ENCODE measurements at regions of chr1 and their contacts with region 1.

Region 1: GRCh38 chr1:108643492-108644335 is 17.2 kb downstream of the HENMT1 start:
- DNase-seq: peak; percentile 69
- H3K4me3 Mint-ChIP-seq: no peak overlapping the region
- H3K27ac Mint-ChIP-seq: no peak overlapping the region
- H3K4me1 Mint-ChIP-seq: peaks cover 7% of the 10 kb centered on the region
- H3K27me3 Mint-ChIP-seq: no peaks in the 10 kb centered on the region
- CTCF ChIP-seq: peak; percentile 51

Region 2: GRCh38 chr1:108512239-108512981 is 131.3 kb before region 1 on chr1:
- CTCF ChIA-PET with region 1: interaction called, 122 read pairs
- POLR2A ChIA-PET with region 1: interaction called, 6 read pairs
- intact Hi-C with region 1: loop called (anchors 1 kb)
- DNase-seq: peak; percentile 52
- H3K4me3 Mint-ChIP-seq: no peak overlapping the region
- H3K27ac Mint-ChIP-seq: no peak overlapping the region
- H3K4me1 Mint-ChIP-seq: no peaks in the 10 kb centered on the region
- H3K27me3 Mint-ChIP-seq: peaks cover 15% of the 10 kb centered on the region
- CTCF ChIP-seq: peak; percentile 86

Region 3: DNA sequence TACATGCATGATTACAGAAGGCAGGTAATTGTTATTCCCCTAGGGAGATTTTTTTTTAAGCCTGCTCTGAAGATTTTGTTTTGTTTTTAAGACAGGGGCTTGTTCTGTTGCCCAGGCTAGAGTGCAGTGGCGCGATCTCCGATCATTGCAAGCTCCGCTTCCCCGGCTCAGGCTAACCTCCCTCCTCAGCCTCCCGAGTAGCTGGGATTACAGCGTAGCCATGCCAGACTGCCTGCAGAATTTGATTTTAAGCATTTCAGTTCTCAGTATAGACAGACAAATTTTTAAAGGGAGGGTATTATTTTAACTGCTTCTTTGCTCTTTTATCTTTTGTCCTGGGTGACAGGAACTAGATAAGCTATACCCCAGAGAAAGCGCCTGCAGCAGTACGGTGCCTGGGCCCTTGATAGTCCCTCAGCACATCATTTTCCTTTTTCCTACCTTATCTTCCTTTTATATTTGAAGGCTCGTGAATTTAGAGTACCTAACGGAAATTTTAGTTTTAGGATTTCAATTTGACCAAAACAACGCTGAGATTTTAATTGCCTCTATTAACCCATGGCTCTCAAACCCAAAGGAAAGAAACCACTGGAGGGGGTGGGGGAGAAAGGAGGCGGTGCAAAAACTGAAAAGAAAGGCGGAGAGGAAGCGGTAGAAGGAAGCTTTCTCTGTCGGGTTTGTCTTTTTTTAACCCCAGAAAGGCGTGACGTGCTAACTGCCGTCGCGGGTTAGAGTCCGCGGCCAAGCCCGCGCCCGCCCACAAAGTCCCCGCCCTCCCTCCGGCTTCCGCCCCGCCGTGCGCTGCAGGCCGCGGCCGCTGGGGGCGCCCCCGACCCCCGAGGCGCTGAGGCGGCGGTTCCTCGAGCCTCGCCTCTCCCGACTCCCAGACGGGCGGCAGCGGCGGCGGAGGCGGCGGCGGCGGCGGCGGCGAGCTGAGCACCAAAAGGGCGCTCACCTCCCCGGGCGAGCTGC is 84.2 kb before region 1 on chr1 and contains the start of gene EEIG2:
- CTCF ChIA-PET with region 1: interaction called, 25 read pairs
- POLR2A ChIA-PET with region 1: no interaction called
- intact Hi-C with region 1: no loop called
- DNase-seq: peak; percentile 82
- H3K4me3 Mint-ChIP-seq: peak within 1 kb of the TSS; percentile 78
- H3K27ac Mint-ChIP-seq: no peak within 1 kb of the TSS
- H3K4me1 Mint-ChIP-seq: no peaks in the 10 kb centered on the region
- H3K27me3 Mint-ChIP-seq: no peaks in the 10 kb centered on the region
- CTCF ChIP-seq: peak; percentile 71
- total RNA-seq, gene EEIG2: 0.63 and 0.93 TPM in 2 replicates

Region 4: GRCh38 chr1:108590957-108591356 is 52.8 kb before region 1 on chr1:
- CTCF ChIA-PET with region 1: interaction called, 3 read pairs
- POLR2A ChIA-PET with region 1: no interaction called
- intact Hi-C with region 1: loop called (anchors 5 kb)
- DNase-seq: peak; percentile 61
- H3K4me3 Mint-ChIP-seq: no peak overlapping the region
- H3K27ac Mint-ChIP-seq: no peak overlapping the region
- H3K4me1 Mint-ChIP-seq: peaks cover 5% of the 10 kb centered on the region
- H3K27me3 Mint-ChIP-seq: no peaks in the 10 kb centered on the region
- CTCF ChIP-seq: no peak

Region 5: GRCh38 chr1:108661030-108661620 is 17.4 kb after region 1 on chr1 and contains the start of gene HENMT1:
- CTCF ChIA-PET with region 1: interaction called, 10 read pairs
- POLR2A ChIA-PET with region 1: no interaction called
- intact Hi-C with region 1: no loop called
- DNase-seq: no peak
- H3K4me3 Mint-ChIP-seq: no peak within 1 kb of the TSS
- H3K27ac Mint-ChIP-seq: no peak within 1 kb of the TSS
- H3K4me1 Mint-ChIP-seq: no peaks in the 10 kb centered on the region
- H3K27me3 Mint-ChIP-seq: peaks cover 14% of the 10 kb centered on the region
- CTCF ChIP-seq: no peak
- total RNA-seq, gene HENMT1: not detected in 2 replicates

Region 6: GRCh38 chr1:108732398-108732797 is 88.7 kb after region 1 on chr1:
- CTCF ChIA-PET with region 1: no interaction called
- POLR2A ChIA-PET with region 1: no interaction called
- intact Hi-C with region 1: no loop called
- DNase-seq: no peak
- H3K4me3 Mint-ChIP-seq: no peak overlapping the region
- H3K27ac Mint-ChIP-seq: no peak overlapping the region
- H3K4me1 Mint-ChIP-seq: no peaks in the 10 kb centered on the region
- H3K27me3 Mint-ChIP-seq: no peaks in the 10 kb centered on the region
- CTCF ChIP-seq: no peak

Region 7: GRCh38 chr1:108897865-108898720 is 254.4 kb after region 1 on chr1:
- CTCF ChIA-PET with region 1: no interaction called
- POLR2A ChIA-PET with region 1: no interaction called
- intact Hi-C with region 1: loop called (anchors 5 kb)
- DNase-seq: peak; percentile 73
- H3K4me3 Mint-ChIP-seq: no peak overlapping the region
- H3K27ac Mint-ChIP-seq: peak overlapping the region; percentile 23
- H3K4me1 Mint-ChIP-seq: peaks cover 20% of the 10 kb centered on the region
- H3K27me3 Mint-ChIP-seq: no peaks in the 10 kb centered on the region
- CTCF ChIP-seq: peak; percentile 63